ENCODE measurements at regions of chr3 and their contacts with region 1.

Region 1: GRCh38 chr3:10845839-10846656 is 30.0 kb downstream of the SLC6A11 start:
- DNase-seq: no peak
- ATAC-seq: peak; percentile 44 to 52
- H3K4me3 ChIP-seq: no peak overlapping the region
- H3K27ac ChIP-seq: no peak overlapping the region
- H3K4me1 ChIP-seq: no peaks in the 10 kb centered on the region
- H3K27me3 ChIP-seq: no peaks in the 10 kb centered on the region

Region 2: GRCh38 chr3:10485380-10485779 is 360.7 kb before region 1 on chr3:
- intact Hi-C with region 1: loop called in 1 of 4 experiments (anchors 10 kb)
- DNase-seq: no peak
- ATAC-seq: peak in 1 of 2 donors; percentile 18
- H3K4me3 ChIP-seq: no peak overlapping the region
- H3K27ac ChIP-seq: no peak overlapping the region
- H3K4me1 ChIP-seq: no peaks in the 10 kb centered on the region
- H3K27me3 ChIP-seq: no peaks in the 10 kb centered on the region